Heart right ventricle (tissue), 16 donors: ENCODE measurements at regions of chr5 and their contacts with region 1.

Region 1: DNA sequence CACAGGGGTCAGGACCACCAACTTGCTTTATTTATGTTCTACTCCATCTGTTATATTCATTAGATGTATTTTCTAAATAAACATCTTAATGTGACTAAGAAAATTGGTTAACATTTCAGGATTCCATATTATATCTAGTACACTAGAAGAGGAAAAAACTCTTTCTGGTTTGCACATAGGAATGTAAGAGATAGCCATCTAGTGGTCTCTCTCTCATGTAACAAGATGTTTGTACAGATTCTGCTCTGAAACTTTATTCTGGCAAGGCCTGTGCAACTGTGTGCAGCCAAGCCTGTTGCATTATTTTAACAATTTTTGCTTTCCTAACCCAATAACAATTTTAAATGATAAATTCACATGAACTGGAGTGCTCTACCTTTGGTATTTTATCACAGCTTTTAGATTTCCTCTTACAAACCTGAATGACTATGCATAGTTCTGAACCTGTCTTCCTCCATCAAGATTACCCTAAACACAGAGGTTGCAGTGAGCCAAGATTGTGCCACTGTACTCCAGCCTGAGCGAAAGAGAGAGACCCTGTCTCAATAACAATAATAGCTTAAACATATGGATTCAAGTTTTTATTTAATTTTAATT is 148.1 kb downstream of the GIN1 start:
- DNase-seq: no peak
- ATAC-seq: peak in 6 of 8 donors; percentile 42 to 74 (median 51)
- H3K4me3 ChIP-seq: no peak overlapping the region
- H3K27ac ChIP-seq: no peak overlapping the region
- H3K4me1 ChIP-seq: peaks cover 0 to 16% (median 10%) of the 10 kb centered on the region in 9 donors
- H3K27me3 ChIP-seq: no peaks in the 10 kb centered on the region
- CTCF ChIP-seq: peak in 7 of 9 donors; percentile 36 to 72 (median 50)

Region 2: GRCh38 chr5:102715082-102715819 is 256.5 kb before region 1 on chr5:
- intact Hi-C with region 1: no loop called
- DNase-seq: no peak
- ATAC-seq: no peak
- H3K4me3 ChIP-seq: no peak overlapping the region
- H3K27ac ChIP-seq: no peak overlapping the region
- H3K4me1 ChIP-seq: peaks cover 0 to 5% (median 0%) of the 10 kb centered on the region in 9 donors
- H3K27me3 ChIP-seq: no peaks in the 10 kb centered on the region
- CTCF ChIP-seq: no peak

Region 3: GRCh38 chr5:102771435-102771834 is 200.4 kb before region 1 on chr5:
- intact Hi-C with region 1: loop called in 3 of 10 experiments (anchors 5 to 10 kb)
- DNase-seq: no peak
- ATAC-seq: peak in 4 of 8 donors; percentile 52 to 79 (median 72)
- H3K4me3 ChIP-seq: no peak overlapping the region
- H3K27ac ChIP-seq: peak overlapping the region in 6 of 10 donors; percentile 2 to 74 (median 65)
- H3K4me1 ChIP-seq: peaks cover 0 to 51% (median 33%) of the 10 kb centered on the region in 9 donors
- H3K27me3 ChIP-seq: no peaks in the 10 kb centered on the region
- CTCF ChIP-seq: no peak

Region 4: DNA sequence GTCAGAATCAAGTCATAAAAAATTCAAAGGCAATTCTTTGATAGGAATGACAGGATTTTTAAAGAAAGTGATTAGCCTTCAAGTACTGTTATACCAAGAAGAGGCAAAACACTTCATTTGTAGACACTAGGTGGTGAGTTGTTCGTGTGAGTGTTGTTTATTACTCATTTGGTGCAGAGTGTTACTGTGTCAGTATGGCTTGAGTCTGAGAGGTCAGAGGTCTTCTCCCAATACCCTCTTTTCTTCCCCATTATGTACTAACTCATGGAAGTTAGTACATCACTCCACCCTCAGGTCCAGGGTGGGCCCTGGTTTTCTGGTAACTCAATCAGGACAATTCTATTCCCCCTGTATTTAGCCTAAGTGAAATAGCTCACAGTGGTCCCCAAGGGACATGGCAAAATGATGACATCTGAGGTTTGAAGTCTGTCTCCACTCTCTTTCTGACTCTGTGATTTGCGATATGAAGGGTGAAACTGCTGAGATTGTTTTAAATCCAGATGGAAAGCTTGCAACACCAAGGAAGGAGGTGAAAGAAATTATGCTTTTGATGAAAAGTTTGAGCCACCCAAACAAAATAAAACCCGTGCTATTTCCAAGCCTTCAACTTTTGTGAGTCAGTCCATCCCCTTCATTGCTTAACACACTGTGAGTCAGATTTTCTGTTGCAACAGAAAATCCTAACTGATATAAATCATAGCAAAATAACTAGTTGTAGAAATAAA is 533.9 kb after region 1 on chr5:
- intact Hi-C with region 1: no loop called
- DNase-seq: no peak
- ATAC-seq: no peak
- H3K4me3 ChIP-seq: no peak overlapping the region
- H3K27ac ChIP-seq: no peak overlapping the region
- H3K4me1 ChIP-seq: no peaks in the 10 kb centered on the region
- H3K27me3 ChIP-seq: no peaks in the 10 kb centered on the region
- CTCF ChIP-seq: no peak